Aorta (tissue), 5 donors: ENCODE measurements at regions of chr1 and their contacts with region 1.

Region 1: DNA sequence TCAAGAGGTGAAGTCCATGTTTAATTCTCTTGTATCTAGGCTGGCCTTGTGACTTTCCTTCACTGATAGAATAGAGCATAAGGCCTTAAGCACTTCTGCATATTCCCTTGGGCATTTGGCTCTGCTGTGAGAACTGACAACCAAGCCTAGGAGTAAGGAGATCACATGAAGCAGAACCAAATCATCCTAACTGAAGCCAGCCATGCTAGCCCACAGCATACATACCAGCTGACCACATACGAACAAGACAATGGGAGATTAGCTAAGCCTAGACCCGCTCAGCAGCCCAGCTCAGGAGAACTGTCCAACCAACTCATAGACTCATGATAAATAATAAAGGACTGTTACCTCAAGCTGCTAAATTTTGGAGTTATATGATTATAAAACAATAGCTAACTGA is 114.6 kb upstream of the NEK7 start:
- DNase-seq: no peak
- ATAC-seq: no peak
- H3K4me3 ChIP-seq: no peak overlapping the region
- H3K27ac ChIP-seq: no peak overlapping the region
- H3K4me1 ChIP-seq: no peaks in the 10 kb centered on the region
- H3K27me3 ChIP-seq: no peaks in the 10 kb centered on the region

Region 2: DNA sequence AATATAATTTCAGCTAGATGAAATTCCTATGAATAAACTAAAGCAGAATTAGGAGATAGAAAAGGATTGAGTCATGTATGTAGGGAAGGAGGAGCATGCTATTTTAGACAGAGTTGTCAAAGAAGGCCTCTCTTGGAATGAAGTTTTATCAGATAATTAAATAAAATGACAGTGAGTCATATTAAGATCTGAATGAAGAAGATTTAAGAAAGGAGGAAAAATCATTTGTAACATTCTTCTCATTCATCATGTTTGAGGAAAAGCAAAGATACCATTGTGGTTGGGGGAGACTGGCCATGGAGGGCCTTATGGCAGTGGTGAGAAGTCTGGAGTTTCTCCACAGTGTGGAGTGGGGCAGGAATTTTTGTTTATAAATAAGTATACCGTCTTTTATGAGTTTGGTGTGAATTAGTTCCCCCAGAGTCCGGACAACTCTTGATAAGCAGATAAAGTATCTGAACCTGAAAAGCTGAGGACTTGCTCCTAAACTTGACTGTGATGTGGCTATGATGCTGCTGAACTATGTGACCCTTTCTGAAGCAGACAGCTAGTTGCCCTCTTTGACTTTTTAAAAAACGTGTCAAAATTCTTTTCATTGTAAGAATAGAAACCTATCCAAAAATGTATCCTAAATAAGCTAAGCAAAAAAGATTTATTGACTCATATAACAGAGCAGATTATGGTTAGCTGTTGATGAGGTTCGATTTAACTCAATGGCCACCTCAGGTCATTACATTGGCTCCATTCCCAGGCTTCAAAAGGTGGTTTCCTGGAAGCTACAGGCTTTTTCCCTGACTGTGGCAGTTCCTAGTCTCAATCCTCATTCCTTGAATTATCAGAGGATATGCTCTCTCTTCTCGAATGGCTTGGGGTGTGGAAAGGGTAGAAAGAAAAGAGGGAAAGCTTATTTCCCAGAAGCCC is 34.2 kb before region 1 on chr1:
- intact Hi-C with region 1: no loop called
- DNase-seq: no peak
- ATAC-seq: no peak
- H3K4me3 ChIP-seq: no peak overlapping the region
- H3K27ac ChIP-seq: no peak overlapping the region
- H3K4me1 ChIP-seq: no peaks in the 10 kb centered on the region
- H3K27me3 ChIP-seq: peaks cover 0 to 1% of the 10 kb centered on the region in 2 donors

Region 3: GRCh38 chr1:198246337-198246736 is 204.2 kb after region 1 on chr1:
- intact Hi-C with region 1: no loop called
- DNase-seq: no peak
- ATAC-seq: no peak
- H3K4me3 ChIP-seq: no peak overlapping the region
- H3K27ac ChIP-seq: no peak overlapping the region
- H3K4me1 ChIP-seq: peaks cover 0 to 1% of the 10 kb centered on the region in 2 donors
- H3K27me3 ChIP-seq: no peaks in the 10 kb centered on the region

Region 4: GRCh38 chr1:198520524-198521254 is 478.5 kb after region 1 on chr1:
- intact Hi-C with region 1: no loop called
- DNase-seq: no peak
- ATAC-seq: no peak
- H3K4me3 ChIP-seq: no peak overlapping the region
- H3K27ac ChIP-seq: no peak overlapping the region
- H3K4me1 ChIP-seq: no peaks in the 10 kb centered on the region
- H3K27me3 ChIP-seq: no peaks in the 10 kb centered on the region

Region 5: DNA sequence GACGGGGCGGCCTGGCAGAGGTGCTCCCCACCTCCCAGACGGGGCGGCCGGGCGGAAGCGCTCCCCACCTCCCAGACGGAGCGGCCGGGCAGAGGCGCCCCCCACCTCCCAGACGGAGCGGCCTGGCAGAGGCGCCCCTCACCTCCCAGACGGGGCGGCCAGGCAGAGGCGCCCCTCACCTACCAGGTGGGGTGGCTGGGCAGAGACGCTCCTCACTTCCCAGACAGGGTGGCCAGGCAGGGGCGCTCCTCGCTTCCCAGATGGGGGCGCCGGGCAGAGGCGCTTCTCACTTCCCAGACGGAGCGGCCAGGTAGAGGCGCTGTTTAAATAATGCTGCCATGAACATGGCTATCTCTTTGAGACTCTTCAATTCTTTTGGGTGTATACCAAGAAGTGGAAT is 542.0 kb after region 1 on chr1:
- intact Hi-C with region 1: loop called in 1 of 2 experiments (anchors 5 kb)
- DNase-seq: no peak
- ATAC-seq: no peak
- H3K4me3 ChIP-seq: no peak overlapping the region
- H3K27ac ChIP-seq: no peak overlapping the region
- H3K4me1 ChIP-seq: no peaks in the 10 kb centered on the region
- H3K27me3 ChIP-seq: no peaks in the 10 kb centered on the region